IMR-90 (cell line): ENCODE measurements at regions of chr17 and their contacts with region 1.

Region 1: DNA sequence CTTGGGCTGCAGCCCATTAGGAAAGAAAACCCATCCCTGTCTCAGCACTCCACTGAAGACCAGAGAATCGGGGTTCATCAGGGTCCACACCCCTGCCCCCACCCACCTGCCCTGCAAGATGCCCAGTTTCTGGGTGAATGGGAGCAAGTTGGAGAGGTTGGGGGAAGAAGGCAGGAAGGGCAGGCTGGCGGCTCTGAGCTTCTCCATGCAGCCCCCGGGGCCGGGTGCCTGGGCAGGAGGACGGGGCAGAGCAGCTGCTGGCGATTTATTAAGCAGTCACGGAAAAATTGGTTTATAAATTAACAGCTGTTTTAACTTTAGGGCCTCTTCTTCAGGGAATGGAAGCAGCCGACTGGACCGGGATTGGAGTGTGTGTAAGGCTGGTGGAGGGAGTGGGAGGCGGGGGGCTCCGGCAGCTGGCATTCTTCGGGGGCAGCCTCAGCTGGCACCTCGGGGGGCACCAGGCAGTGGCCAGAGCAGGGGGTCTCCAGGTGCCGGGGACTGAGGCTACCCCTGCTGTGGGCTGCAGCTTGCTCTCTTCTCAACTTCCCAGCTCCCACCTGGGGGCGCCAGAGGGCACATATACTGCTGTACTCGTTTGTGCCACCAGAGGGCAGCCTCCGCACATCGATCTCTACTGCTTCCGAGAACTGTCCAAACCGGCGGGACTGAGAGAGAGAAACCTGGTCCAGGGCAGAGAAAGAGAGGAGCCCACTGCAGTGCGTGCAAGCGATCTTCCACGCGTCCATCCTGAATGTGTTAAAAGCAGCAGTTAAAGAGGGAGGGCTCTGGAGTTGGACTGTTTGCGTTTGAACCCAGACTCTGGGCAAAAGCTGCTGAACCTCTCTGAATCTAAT is 5.0 kb upstream of the PPP1R1B start:
- DNase-seq: peak; percentile 69
- ATAC-seq: peak; percentile 79
- H3K4me3 ChIP-seq: no peak overlapping the region
- H3K27ac ChIP-seq: no peak overlapping the region
- H3K4me1 ChIP-seq: peaks cover 1% of the 10 kb centered on the region; the same call in 1 of the 2 replicates
- H3K27me3 ChIP-seq: peaks cover 51% of the 10 kb centered on the region
- CTCF ChIP-seq: peak; percentile 100; the same call in 1 of the 2 replicates
- POLR2A ChIP-seq: no peak
- RAD21 ChIP-seq: peak; percentile 93

Region 2: DNA sequence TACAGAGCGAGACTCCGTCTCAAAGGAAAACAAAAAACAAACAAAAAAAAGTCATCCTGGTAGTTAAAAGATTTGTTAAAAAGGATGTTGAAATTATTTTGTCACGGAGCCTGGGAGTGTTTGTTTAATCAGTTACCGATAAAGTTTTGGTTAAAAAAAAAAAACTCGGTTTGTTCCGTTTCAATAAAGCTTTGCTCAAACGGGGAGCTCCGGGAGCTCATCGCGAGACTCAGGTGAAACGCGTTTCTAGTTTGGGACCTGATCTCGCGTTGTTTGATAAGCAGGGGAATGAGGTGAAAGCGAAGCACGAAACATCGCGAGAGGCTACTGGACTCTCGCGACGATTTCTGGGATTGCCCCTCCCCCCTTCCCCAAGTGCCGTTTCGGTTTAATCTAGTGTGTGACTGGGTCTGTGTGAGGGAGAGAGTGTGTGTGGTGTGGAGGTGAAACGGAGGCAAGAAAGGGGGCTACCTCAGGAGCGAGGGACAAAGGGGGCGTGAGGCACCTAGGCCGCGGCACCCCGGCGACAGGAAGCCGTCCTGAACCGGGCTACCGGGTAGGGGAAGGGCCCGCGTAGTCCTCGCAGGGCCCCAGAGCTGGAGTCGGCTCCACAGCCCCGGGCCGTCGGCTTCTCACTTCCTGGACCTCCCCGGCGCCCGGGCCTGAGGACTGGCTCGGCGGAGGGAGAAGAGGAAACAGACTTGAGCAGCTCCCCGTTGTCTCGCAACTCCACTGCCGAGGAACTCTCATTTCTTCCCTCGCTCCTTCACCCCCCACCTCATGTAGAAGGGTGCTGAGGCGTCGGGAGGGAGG is 160.4 kb before region 1 on chr17 and contains the start of gene CDK12:
- CTCF ChIA-PET with region 1: no interaction called
- POLR2A ChIA-PET with region 1: no interaction called
- dilution Hi-C with region 1: no loop called
- in situ Hi-C with region 1: no loop called
- intact Hi-C with region 1: no loop called
- DNase-seq: peak; percentile 100
- ATAC-seq: peak; percentile 91
- H3K4me3 ChIP-seq: peak within 1 kb of the TSS; percentile 82
- H3K27ac ChIP-seq: peak within 1 kb of the TSS; percentile 94
- H3K4me1 ChIP-seq: no peaks in the 10 kb centered on the region
- H3K27me3 ChIP-seq: no peaks in the 10 kb centered on the region
- CTCF ChIP-seq: no peak
- POLR2A ChIP-seq: peak; percentile 96
- RAD21 ChIP-seq: no peak
- total RNA-seq, gene CDK12: 27.1 and 31.1 TPM in 2 replicates

Region 3: DNA sequence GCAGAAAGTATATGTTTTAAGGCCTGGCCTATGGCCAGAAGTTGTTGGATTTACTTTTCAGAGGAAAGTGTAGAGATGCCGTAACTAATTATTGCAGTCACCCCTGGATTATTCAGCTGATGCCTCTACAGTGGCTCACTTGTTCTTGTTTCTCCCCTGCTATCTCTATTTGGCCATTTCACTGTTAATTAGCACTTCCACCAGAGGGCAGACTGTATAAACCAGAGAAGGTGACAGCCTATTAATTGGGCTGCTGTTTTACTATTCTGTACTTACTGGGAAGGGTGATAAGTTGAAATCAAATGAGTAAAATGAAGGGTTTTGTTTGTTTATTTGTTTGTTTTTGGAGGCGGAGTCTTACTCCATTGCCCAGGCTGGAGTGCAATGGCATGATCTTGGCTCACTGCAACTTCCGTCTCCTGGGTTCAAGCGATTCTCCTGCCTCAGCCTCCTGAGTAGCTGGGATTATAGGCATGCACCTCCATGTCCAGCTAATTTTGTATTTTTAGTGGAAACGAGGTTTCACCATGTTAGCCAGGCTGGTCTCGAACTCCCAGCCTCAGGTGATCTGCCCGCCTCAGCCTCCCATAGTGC is 94.4 kb before region 1 on chr17:
- CTCF ChIA-PET with region 1: no interaction called
- POLR2A ChIA-PET with region 1: no interaction called
- dilution Hi-C with region 1: no loop called
- in situ Hi-C with region 1: no loop called
- intact Hi-C with region 1: loop called (anchors 1 kb)
- DNase-seq: no peak
- ATAC-seq: peak; percentile 53; the same call in 1 of the 2 replicates
- H3K4me3 ChIP-seq: no peak overlapping the region
- H3K27ac ChIP-seq: no peak overlapping the region
- H3K4me1 ChIP-seq: no peaks in the 10 kb centered on the region
- H3K27me3 ChIP-seq: no peaks in the 10 kb centered on the region
- CTCF ChIP-seq: peak; percentile 32
- POLR2A ChIP-seq: no peak
- RAD21 ChIP-seq: no peak

Region 4: DNA sequence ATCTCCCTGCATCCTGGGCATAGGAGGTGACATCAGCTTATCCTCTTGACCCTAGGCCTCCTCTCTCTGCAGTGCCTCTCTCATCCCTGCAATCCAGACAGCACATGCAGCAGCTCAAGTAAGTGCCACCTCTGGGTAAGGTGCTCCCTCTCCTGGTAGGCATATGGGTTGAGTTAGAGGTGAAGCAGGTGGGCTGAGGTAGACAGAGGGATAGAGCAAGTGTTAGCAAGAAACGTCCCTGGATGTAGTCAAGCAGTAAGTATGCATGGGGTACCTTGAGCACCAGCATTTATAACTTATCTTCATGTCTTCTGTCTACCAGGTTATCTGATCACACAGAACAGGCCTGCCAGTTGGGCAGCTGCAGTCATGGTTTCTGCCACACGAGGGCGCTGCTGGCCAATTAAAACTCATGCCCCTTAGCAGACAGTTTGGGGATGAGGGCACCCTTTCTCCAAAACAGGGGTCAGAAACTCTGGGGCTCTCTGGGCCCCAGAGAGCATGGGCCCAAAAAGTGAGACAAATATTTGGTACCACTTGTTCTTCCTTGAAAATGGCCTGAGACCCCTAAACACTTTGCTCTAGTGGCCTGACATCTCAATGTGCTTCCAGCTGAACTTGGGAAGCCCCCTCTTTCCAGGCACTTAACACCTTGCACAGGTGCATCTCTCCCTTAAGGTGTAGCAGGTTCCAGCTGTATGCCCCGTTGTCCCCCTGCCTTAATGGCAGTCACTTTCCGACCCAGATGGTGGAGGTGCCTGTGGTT is 73.9 kb before region 1 on chr17:
- CTCF ChIA-PET with region 1: interaction called, 7 read pairs
- POLR2A ChIA-PET with region 1: no interaction called
- dilution Hi-C with region 1: no loop called
- in situ Hi-C with region 1: loop called (anchors 5 kb)
- intact Hi-C with region 1: loop called (anchors 1 kb)
- DNase-seq: no peak
- ATAC-seq: peak; percentile 86
- H3K4me3 ChIP-seq: no peak overlapping the region
- H3K27ac ChIP-seq: no peak overlapping the region
- H3K4me1 ChIP-seq: no peaks in the 10 kb centered on the region
- H3K27me3 ChIP-seq: no peaks in the 10 kb centered on the region
- CTCF ChIP-seq: peak; percentile 84
- POLR2A ChIP-seq: no peak
- RAD21 ChIP-seq: peak; percentile 77

Region 5: GRCh38 chr17:39636927-39637736 is 15.4 kb after region 1 on chr17 and contains the start of gene STARD3:
- CTCF ChIA-PET with region 1: interaction called, 11 read pairs
- POLR2A ChIA-PET with region 1: no interaction called
- dilution Hi-C with region 1: no loop called
- in situ Hi-C with region 1: no loop called
- intact Hi-C with region 1: no loop called
- DNase-seq: peak; percentile 82
- ATAC-seq: peak; percentile 97
- H3K4me3 ChIP-seq: peak within 1 kb of the TSS; percentile 96
- H3K27ac ChIP-seq: peak within 1 kb of the TSS; percentile 87
- H3K4me1 ChIP-seq: peaks cover 24% of the 10 kb centered on the region
- H3K27me3 ChIP-seq: peaks cover 9% of the 10 kb centered on the region
- CTCF ChIP-seq: 0 out of 2 replicates have a peak, but pooled peaks have one; percentile 14
- POLR2A ChIP-seq: no peak; the same call in 1 of the 2 replicates
- RAD21 ChIP-seq: no peak
- total RNA-seq, gene STARD3: 8.1 and 8.6 TPM in 2 replicates

Region 6: GRCh38 chr17:39658346-39658745 is 36.6 kb after region 1 on chr17:
- CTCF ChIA-PET with region 1: no interaction called
- POLR2A ChIA-PET with region 1: no interaction called
- dilution Hi-C with region 1: no loop called
- in situ Hi-C with region 1: no loop called
- intact Hi-C with region 1: no loop called
- DNase-seq: no peak
- ATAC-seq: no peak
- H3K4me3 ChIP-seq: no peak overlapping the region
- H3K27ac ChIP-seq: no peak overlapping the region
- H3K4me1 ChIP-seq: no peaks in the 10 kb centered on the region
- H3K27me3 ChIP-seq: no peaks in the 10 kb centered on the region
- CTCF ChIP-seq: no peak
- POLR2A ChIP-seq: no peak
- RAD21 ChIP-seq: no peak

Region 7: GRCh38 chr17:39668199-39668966 is 46.6 kb after region 1 on chr17 and contains the start of gene PNMT:
- CTCF ChIA-PET with region 1: interaction called, 11 read pairs
- POLR2A ChIA-PET with region 1: no interaction called
- dilution Hi-C with region 1: no loop called
- in situ Hi-C with region 1: no loop called
- intact Hi-C with region 1: loop called (anchors 1 kb)
- DNase-seq: peak; percentile 39
- ATAC-seq: peak; percentile 67
- H3K4me3 ChIP-seq: no peak within 1 kb of the TSS
- H3K27ac ChIP-seq: no peak within 1 kb of the TSS
- H3K4me1 ChIP-seq: peaks cover 7% of the 10 kb centered on the region; the same call in 1 of the 2 replicates
- H3K27me3 ChIP-seq: peaks cover 44% of the 10 kb centered on the region
- CTCF ChIP-seq: peak; percentile 62
- POLR2A ChIP-seq: no peak
- RAD21 ChIP-seq: peak; percentile 49
- total RNA-seq, gene PNMT: not detected in 2 replicates

Region 8: DNA sequence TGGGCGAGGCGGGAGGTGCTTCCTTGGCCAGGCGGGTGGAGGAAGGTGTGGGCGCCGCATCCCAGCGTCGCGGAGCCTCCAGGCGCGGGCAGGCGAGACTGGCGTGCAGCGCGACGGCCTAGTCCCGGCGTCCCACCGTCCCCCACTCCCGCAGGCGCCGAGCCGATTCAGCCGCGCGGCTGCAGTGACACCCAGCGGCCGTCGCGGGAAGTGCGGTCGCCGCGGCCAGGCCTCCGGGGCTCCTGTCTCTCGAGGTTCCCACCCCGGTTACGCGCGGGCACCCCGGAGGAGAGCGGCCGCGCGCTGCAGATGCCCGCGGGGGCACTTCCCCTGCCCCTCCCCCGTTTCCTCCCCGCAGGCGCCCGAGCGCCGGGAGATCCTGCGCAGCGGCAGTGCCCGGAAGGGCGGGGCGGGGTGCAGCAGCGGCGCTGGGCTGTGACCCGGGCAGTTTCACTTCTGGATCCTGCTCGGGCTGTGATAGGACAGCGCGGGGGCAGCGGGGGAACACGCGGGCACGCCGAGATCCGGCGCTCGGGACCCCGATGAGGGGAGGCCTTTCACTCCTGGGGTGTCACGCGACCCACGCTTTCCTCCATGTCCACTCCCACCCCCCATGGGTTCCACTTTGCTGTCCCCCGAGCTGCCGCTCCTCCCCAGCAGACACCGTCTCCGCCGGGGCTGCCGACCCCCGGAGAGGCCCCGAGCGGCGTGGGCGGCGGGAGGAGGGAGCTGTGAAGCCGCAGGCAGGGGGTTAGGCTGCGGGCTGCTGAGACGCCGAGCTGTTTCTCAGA is 132.6 kb after region 1 on chr17:
- CTCF ChIA-PET with region 1: interaction called, 3 read pairs
- POLR2A ChIA-PET with region 1: no interaction called
- dilution Hi-C with region 1: no loop called
- in situ Hi-C with region 1: no loop called
- intact Hi-C with region 1: loop called (anchors 1 kb)
- DNase-seq: peak; percentile 74
- ATAC-seq: peak; percentile 95
- H3K4me3 ChIP-seq: peak overlapping the region; percentile 76
- H3K27ac ChIP-seq: peak overlapping the region; percentile 72
- H3K4me1 ChIP-seq: peaks cover 7% of the 10 kb centered on the region
- H3K27me3 ChIP-seq: peaks cover 19% of the 10 kb centered on the region
- CTCF ChIP-seq: peak; percentile 93
- POLR2A ChIP-seq: peak; percentile 30
- RAD21 ChIP-seq: peak; percentile 89

Region 9: GRCh38 chr17:39822051-39822451 is 200.3 kb after region 1 on chr17:
- CTCF ChIA-PET with region 1: no interaction called
- POLR2A ChIA-PET with region 1: no interaction called
- dilution Hi-C with region 1: no loop called
- in situ Hi-C with region 1: no loop called
- intact Hi-C with region 1: no loop called
- DNase-seq: no peak
- ATAC-seq: no peak
- H3K4me3 ChIP-seq: no peak overlapping the region
- H3K27ac ChIP-seq: no peak overlapping the region
- H3K4me1 ChIP-seq: no peaks in the 10 kb centered on the region
- H3K27me3 ChIP-seq: peaks cover 16% of the 10 kb centered on the region
- CTCF ChIP-seq: no peak
- POLR2A ChIP-seq: no peak
- RAD21 ChIP-seq: no peak

Region 10: GRCh38 chr17:39980351-39981206 is 358.8 kb after region 1 on chr17 and contains the start of gene PSMD3:
- CTCF ChIA-PET with region 1: no interaction called
- POLR2A ChIA-PET with region 1: no interaction called
- dilution Hi-C with region 1: no loop called
- in situ Hi-C with region 1: no loop called
- intact Hi-C with region 1: loop called (anchors 10 kb)
- DNase-seq: peak; percentile 100
- ATAC-seq: peak; percentile 95
- H3K4me3 ChIP-seq: peak within 1 kb of the TSS; percentile 80
- H3K27ac ChIP-seq: peak within 1 kb of the TSS; percentile 54
- H3K4me1 ChIP-seq: peaks cover 8% of the 10 kb centered on the region; the same call in 1 of the 2 replicates
- H3K27me3 ChIP-seq: no peaks in the 10 kb centered on the region
- CTCF ChIP-seq: peak; percentile 98
- POLR2A ChIP-seq: peak; percentile 89
- RAD21 ChIP-seq: peak; percentile 92
- total RNA-seq, gene PSMD3: 123 and 125 TPM in 2 replicates